ENCODE measurements at regions of chr12 and their contacts with region 1.

Region 1: GRCh38 chr12:71014180-71014785 is 93.7 kb upstream of the PTPRR start:
- DNase-seq: peak; percentile 24
- H3K4me3 Mint-ChIP-seq: peak overlapping the region; percentile 44
- H3K27ac Mint-ChIP-seq: peak overlapping the region; percentile 50
- H3K4me1 Mint-ChIP-seq: peaks cover 36% of the 10 kb centered on the region
- H3K27me3 Mint-ChIP-seq: no peaks in the 10 kb centered on the region
- CTCF ChIP-seq: peak; percentile 69

Region 2: DNA sequence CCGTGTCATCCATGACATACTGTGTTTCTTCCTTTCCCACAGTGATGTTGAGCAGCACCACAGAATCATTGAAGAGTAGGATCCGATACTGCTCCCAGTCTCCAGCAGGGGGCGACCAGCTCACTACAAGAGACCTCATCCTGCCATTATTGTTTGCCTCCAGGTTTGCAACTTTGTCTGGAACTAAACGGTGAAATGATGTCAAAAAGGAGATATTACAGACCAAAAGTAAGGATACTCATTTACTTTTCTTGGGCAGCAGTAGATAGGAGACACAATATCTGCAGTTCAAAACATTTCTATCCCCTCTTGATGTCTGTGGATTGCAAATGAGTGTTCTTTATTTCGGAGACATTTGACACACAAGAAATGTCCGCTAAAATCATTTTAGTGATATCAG is 424.2 kb before region 1 on chr12:
- CTCF ChIA-PET with region 1: interaction called, 3 read pairs
- intact Hi-C with region 1: loop called (anchors 1 kb)
- DNase-seq: peak; percentile 84
- H3K4me3 Mint-ChIP-seq: no peak overlapping the region
- H3K27ac Mint-ChIP-seq: peak overlapping the region; percentile 11
- H3K4me1 Mint-ChIP-seq: peaks cover 17% of the 10 kb centered on the region
- H3K27me3 Mint-ChIP-seq: no peaks in the 10 kb centered on the region
- CTCF ChIP-seq: peak; percentile 86

Region 3: DNA sequence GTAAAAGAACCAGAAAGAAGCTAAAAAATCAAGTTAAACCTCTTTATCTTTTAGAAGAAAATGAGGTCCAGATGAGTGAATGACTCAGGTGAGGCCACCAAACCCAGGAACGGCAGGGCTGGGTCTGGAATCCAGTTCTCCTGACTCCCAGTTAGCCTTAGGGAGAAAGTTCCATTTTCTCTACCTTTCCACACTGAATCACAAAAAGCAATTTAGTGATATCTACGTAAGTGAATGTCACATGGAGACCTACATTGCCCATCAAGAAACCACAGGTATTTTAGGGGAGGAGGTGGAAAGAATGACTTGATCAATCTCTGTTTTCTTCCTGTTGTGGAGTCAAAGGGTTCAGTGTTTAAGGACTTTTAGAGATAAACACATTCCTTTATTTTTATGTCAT is 270.1 kb before region 1 on chr12:
- CTCF ChIA-PET with region 1: no interaction called
- intact Hi-C with region 1: loop called (anchors 2 kb)
- DNase-seq: peak; percentile 58
- H3K4me3 Mint-ChIP-seq: peak overlapping the region; percentile 8
- H3K27ac Mint-ChIP-seq: peak overlapping the region; percentile 83
- H3K4me1 Mint-ChIP-seq: peaks cover 69% of the 10 kb centered on the region
- H3K27me3 Mint-ChIP-seq: no peaks in the 10 kb centered on the region
- CTCF ChIP-seq: no peak

Region 4: GRCh38 chr12:70849265-70849960 is 164.9 kb before region 1 on chr12:
- CTCF ChIA-PET with region 1: no interaction called
- intact Hi-C with region 1: loop called (anchors 1 kb)
- DNase-seq: no peak
- H3K4me3 Mint-ChIP-seq: no peak overlapping the region
- H3K27ac Mint-ChIP-seq: no peak overlapping the region
- H3K4me1 Mint-ChIP-seq: no peaks in the 10 kb centered on the region
- H3K27me3 Mint-ChIP-seq: no peaks in the 10 kb centered on the region
- CTCF ChIP-seq: peak; percentile 49

Region 5: GRCh38 chr12:71208053-71208685 is 193.9 kb after region 1 on chr12:
- CTCF ChIA-PET with region 1: no interaction called
- intact Hi-C with region 1: no loop called
- DNase-seq: no peak
- H3K4me3 Mint-ChIP-seq: no peak overlapping the region
- H3K27ac Mint-ChIP-seq: no peak overlapping the region
- H3K4me1 Mint-ChIP-seq: no peaks in the 10 kb centered on the region
- H3K27me3 Mint-ChIP-seq: no peaks in the 10 kb centered on the region
- CTCF ChIP-seq: no peak

Region 6: DNA sequence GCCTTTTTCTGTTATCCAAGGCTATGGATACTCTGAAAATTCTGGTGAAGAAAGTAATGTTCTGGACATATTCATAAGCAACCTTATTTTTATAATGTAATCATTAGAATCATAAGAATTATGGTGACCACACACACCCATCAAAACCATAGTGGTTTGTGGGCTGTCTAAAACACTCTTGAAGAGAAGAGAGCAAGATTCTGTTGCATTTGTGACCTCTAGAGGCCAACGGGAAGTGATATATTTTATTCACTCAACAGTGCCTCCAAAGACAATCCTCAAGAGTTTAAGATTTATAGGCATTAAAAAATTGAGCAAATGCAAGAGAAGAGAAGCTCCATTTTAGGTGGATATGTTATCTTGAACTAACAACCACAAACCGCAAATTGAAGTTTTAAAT is 356.8 kb after region 1 on chr12:
- CTCF ChIA-PET with region 1: no interaction called
- intact Hi-C with region 1: loop called (anchors 10 kb)
- DNase-seq: peak; percentile 6
- H3K4me3 Mint-ChIP-seq: no peak overlapping the region
- H3K27ac Mint-ChIP-seq: no peak overlapping the region
- H3K4me1 Mint-ChIP-seq: no peaks in the 10 kb centered on the region
- H3K27me3 Mint-ChIP-seq: no peaks in the 10 kb centered on the region
- CTCF ChIP-seq: peak; percentile 16